Activated CD4-positive, alpha-beta T cell treated with anti-CD3 and anti-CD28 coated beads, Interleukin-2, amount 10 ng/mL, durations not matched to agents 24 days and 14 days (primary cell): ENCODE measurements at regions of chr2 and their contacts with region 1.

Region 1: GRCh38 chr2:36246320-36246990 is 109.1 kb upstream of the CRIM1 start:
- DNase-seq: peak; percentile 82
- H3K4me3 Mint-ChIP-seq: peak overlapping the region; percentile 60
- H3K27ac Mint-ChIP-seq: peak overlapping the region; percentile 90
- H3K4me1 Mint-ChIP-seq: peaks cover 63% of the 10 kb centered on the region
- H3K27me3 Mint-ChIP-seq: peaks cover 6% of the 10 kb centered on the region

Region 2: DNA sequence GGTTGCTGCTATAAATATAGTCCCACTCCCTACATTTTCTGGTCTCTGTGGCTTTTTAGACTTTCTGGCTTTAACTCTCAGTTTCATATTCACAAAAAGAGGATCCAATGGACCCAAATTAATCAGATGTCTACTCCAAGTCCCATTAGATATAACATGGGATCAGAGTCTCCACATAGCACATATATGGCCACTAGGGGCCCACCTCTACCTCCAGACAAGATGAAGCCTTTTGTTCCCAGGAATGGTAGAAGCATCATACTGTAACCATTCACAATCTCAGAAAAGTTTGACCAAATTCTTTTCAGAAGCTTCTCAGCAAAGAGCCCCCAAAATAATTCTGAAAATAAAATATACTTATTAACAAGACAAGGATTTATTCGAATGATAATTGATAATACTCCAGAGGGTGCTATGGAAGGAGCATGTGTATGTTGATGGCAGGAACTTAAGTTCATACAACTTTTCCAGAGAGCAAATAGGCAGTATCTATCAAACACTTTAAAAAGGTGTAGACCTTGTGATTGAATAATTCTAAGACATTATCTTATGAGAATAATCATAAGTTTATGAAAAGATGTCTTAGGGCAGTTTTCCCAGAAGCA is 273.2 kb before region 1 on chr2:
- intact Hi-C with region 1: loop called (anchors 5 kb)
- DNase-seq: no peak
- H3K4me3 Mint-ChIP-seq: no peak overlapping the region
- H3K27ac Mint-ChIP-seq: no peak overlapping the region
- H3K4me1 Mint-ChIP-seq: peaks cover 3% of the 10 kb centered on the region
- H3K27me3 Mint-ChIP-seq: peaks cover 16% of the 10 kb centered on the region

Region 3: GRCh38 chr2:36147670-36148390 is 98.6 kb before region 1 on chr2:
- intact Hi-C with region 1: loop called (anchors 1 kb)
- DNase-seq: peak; percentile 58
- H3K4me3 Mint-ChIP-seq: no peak overlapping the region
- H3K27ac Mint-ChIP-seq: no peak overlapping the region
- H3K4me1 Mint-ChIP-seq: peaks cover 22% of the 10 kb centered on the region
- H3K27me3 Mint-ChIP-seq: peaks cover 22% of the 10 kb centered on the region

Region 4: GRCh38 chr2:36277146-36277808 is 30.8 kb after region 1 on chr2:
- intact Hi-C with region 1: loop called (anchors 2 kb)
- DNase-seq: no peak
- H3K4me3 Mint-ChIP-seq: no peak overlapping the region
- H3K27ac Mint-ChIP-seq: no peak overlapping the region
- H3K4me1 Mint-ChIP-seq: peaks cover 7% of the 10 kb centered on the region
- H3K27me3 Mint-ChIP-seq: no peaks in the 10 kb centered on the region

Region 5: GRCh38 chr2:36287363-36288275 is 41.2 kb after region 1 on chr2:
- intact Hi-C with region 1: loop called (anchors 1 kb)
- DNase-seq: no peak
- H3K4me3 Mint-ChIP-seq: no peak overlapping the region
- H3K27ac Mint-ChIP-seq: peak overlapping the region; percentile 59
- H3K4me1 Mint-ChIP-seq: peaks cover 9% of the 10 kb centered on the region
- H3K27me3 Mint-ChIP-seq: peaks cover 3% of the 10 kb centered on the region

Region 6: DNA sequence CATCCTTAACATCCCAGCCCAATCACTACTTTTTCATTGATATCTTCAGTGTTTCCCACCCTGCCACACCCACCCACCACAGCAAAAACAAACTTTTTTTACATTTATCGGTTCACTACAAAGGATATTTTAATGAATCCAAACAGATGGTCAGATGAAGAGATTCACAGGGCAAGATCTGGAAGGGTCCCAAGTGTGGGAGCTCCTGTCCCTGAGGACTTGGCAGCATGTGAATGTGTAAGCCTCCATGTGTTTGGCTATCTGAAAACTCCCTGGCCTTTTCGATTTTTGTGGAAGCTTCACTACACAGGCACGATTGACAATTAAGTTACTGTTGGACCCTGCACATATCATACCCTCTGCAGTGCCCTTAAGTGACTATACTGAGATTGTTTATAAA is 61.0 kb after region 1 on chr2:
- intact Hi-C with region 1: loop called (anchors 2 kb)
- DNase-seq: no peak
- H3K4me3 Mint-ChIP-seq: no peak overlapping the region
- H3K27ac Mint-ChIP-seq: no peak overlapping the region
- H3K4me1 Mint-ChIP-seq: peaks cover 21% of the 10 kb centered on the region
- H3K27me3 Mint-ChIP-seq: peaks cover 4% of the 10 kb centered on the region

Region 7: GRCh38 chr2:36597532-36598377 is 351.3 kb after region 1 on chr2 and contains the start of gene FEZ2:
- intact Hi-C with region 1: loop called (anchors 5 kb)
- DNase-seq: peak; percentile 94
- H3K4me3 Mint-ChIP-seq: peak within 1 kb of the TSS; percentile 97
- H3K27ac Mint-ChIP-seq: peak within 1 kb of the TSS; percentile 94
- H3K4me1 Mint-ChIP-seq: peaks cover 16% of the 10 kb centered on the region
- H3K27me3 Mint-ChIP-seq: no peaks in the 10 kb centered on the region
- total RNA-seq, gene FEZ2: 13.5 and 17.5 TPM in 2 replicates